Dendritic cell treated with granulocyte-macrophage colony-stimulating factor and Interleukin-4, amounts not matched to agents 40 ng/mL and 50 ng/mL, for 4 days (primary cell): ENCODE measurements at regions of chr1 and their contacts with region 1.

Region 1: GRCh38 chr1:95233737-95234500 is at the start of gene RWDD3:
- H3K4me3 Mint-ChIP-seq: peak within 1 kb of the TSS; percentile 94
- H3K27ac Mint-ChIP-seq: peak within 1 kb of the TSS; percentile 88
- H3K4me1 Mint-ChIP-seq: peaks cover 29% of the 10 kb centered on the region
- H3K27me3 Mint-ChIP-seq: peaks cover 33% of the 10 kb centered on the region

Region 2: GRCh38 chr1:94854458-94855306 is 379.2 kb before region 1 on chr1:
- intact Hi-C with region 1: loop called (anchors 5 kb)
- H3K4me3 Mint-ChIP-seq: no peak overlapping the region
- H3K27ac Mint-ChIP-seq: no peak overlapping the region
- H3K4me1 Mint-ChIP-seq: no peaks in the 10 kb centered on the region
- H3K27me3 Mint-ChIP-seq: peaks cover 21% of the 10 kb centered on the region

Region 3: GRCh38 chr1:95084317-95085176 is 149.4 kb before region 1 on chr1:
- intact Hi-C with region 1: loop called (anchors 5 kb)
- H3K4me3 Mint-ChIP-seq: no peak overlapping the region
- H3K27ac Mint-ChIP-seq: no peak overlapping the region
- H3K4me1 Mint-ChIP-seq: peaks cover 4% of the 10 kb centered on the region
- H3K27me3 Mint-ChIP-seq: peaks cover 19% of the 10 kb centered on the region

Region 4: DNA sequence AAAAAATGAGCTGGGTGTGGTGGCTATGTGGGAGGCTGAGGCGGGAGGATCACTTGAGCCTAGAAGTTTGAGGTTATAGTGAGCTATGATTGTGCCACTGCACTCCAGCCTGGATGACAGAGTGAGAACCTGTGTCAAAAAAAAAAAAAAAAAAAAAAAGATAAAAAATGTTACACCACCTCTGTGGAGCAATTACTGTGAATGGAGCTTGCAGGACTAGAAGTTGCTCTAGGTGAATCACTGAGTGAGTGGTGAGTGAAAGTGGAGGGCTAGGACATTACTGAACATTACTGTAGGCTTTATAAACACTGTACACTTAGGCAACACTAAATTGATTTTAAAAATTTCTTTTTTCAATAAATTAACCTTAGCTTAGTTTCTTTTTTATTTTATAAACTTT is 94.9 kb before region 1 on chr1:
- intact Hi-C with region 1: no loop called
- H3K4me3 Mint-ChIP-seq: no peak overlapping the region
- H3K27ac Mint-ChIP-seq: no peak overlapping the region
- H3K4me1 Mint-ChIP-seq: no peaks in the 10 kb centered on the region
- H3K27me3 Mint-ChIP-seq: peaks cover 2% of the 10 kb centered on the region